ENCODE measurements at regions of chr1 and their contacts with region 1.

Region 1: GRCh38 chr1:174968750-174969244 is 30.9 kb upstream of the CACYBP start:
- H3K4me3 Mint-ChIP-seq: no peak overlapping the region
- H3K27ac Mint-ChIP-seq: peak overlapping the region; percentile 79
- H3K4me1 Mint-ChIP-seq: peaks cover 43% of the 10 kb centered on the region
- H3K27me3 Mint-ChIP-seq: no peaks in the 10 kb centered on the region

Region 2: DNA sequence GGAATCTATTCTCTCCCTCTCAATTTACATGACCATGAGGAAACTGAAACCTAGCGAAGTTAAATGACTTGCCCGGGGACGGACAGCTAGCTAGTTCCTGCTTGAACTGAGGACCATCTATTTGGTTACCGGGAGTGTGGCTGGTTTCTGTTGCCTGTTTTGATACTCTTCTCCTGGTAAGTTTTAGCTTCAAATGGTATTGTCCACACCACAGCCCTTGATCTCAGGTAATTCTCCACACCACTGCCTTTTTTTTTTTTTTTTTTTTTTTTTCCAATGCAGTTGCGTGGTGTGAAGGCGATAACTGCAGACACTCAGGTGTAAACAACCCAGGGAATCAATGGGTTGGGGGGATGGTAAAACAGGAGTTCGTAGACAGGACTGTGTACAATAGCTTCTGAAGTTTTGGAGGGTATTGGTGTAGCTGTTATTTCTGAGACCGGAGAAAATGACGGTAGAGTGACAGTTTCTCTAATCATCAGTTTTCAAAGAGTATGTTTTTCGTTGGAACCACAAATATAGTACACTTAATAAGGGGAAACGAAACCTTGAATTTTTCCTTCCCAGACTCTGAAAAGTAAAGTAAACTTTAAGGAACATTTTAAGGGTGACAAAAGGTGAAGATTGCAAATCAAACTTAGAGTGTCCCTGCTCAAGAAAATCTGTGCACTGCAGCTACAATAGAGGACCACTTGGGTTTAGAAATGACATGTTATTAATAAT is 94.3 kb before region 1 on chr1:
- intact Hi-C with region 1: loop called (anchors 1 kb)
- H3K4me3 Mint-ChIP-seq: peak overlapping the region; percentile 75
- H3K27ac Mint-ChIP-seq: peak overlapping the region; percentile 78
- H3K4me1 Mint-ChIP-seq: no peaks in the 10 kb centered on the region
- H3K27me3 Mint-ChIP-seq: no peaks in the 10 kb centered on the region

Measured in dendritic cell treated with granulocyte-macrophage colony-stimulating factor and Interleukin-4, amounts not matched to agents 40 ng/mL and 50 ng/mL, for 4 days (primary cell).